ENCODE measurements at regions of chr9 and their contacts with region 1.

Region 1: GRCh38 chr9:77751341-77752091 is 103.4 kb upstream of the GNA14 start:
- DNase-seq: peak; percentile 37
- ATAC-seq: peak; percentile 57
- H3K4me3 Mint-ChIP-seq: no peak overlapping the region
- H3K27ac Mint-ChIP-seq: no peak overlapping the region
- H3K4me1 Mint-ChIP-seq: peaks cover 39% of the 10 kb centered on the region
- H3K27me3 Mint-ChIP-seq: no peaks in the 10 kb centered on the region
- CTCF ChIP-seq: peak; percentile 59

Region 2: GRCh38 chr9:77648234-77649120 is 103.0 kb before region 1 on chr9 and contains the start of gene GNA14:
- CTCF ChIA-PET with region 1: interaction called, 7 read pairs
- POLR2A ChIA-PET with region 1: no interaction called
- intact Hi-C with region 1: loop called (anchors 10 kb)
- DNase-seq: peak; percentile 21
- ATAC-seq: peak; percentile 34
- H3K4me3 Mint-ChIP-seq: peak within 1 kb of the TSS; percentile 68
- H3K27ac Mint-ChIP-seq: no peak within 1 kb of the TSS
- H3K4me1 Mint-ChIP-seq: peaks cover 10% of the 10 kb centered on the region
- H3K27me3 Mint-ChIP-seq: peaks cover 43% of the 10 kb centered on the region
- CTCF ChIP-seq: no peak
- total RNA-seq, gene GNA14: not detected

Region 3: GRCh38 chr9:77738932-77739331 is 12.6 kb before region 1 on chr9:
- CTCF ChIA-PET with region 1: interaction called, 12 read pairs
- POLR2A ChIA-PET with region 1: no interaction called
- intact Hi-C with region 1: no loop called
- DNase-seq: no peak
- ATAC-seq: peak; percentile 55
- H3K4me3 Mint-ChIP-seq: no peak overlapping the region
- H3K27ac Mint-ChIP-seq: peak overlapping the region; percentile 17
- H3K4me1 Mint-ChIP-seq: peaks cover 14% of the 10 kb centered on the region
- H3K27me3 Mint-ChIP-seq: no peaks in the 10 kb centered on the region
- CTCF ChIP-seq: no peak